ENCODE measurements at regions of chr9 and their contacts with region 1.

Region 1: DNA sequence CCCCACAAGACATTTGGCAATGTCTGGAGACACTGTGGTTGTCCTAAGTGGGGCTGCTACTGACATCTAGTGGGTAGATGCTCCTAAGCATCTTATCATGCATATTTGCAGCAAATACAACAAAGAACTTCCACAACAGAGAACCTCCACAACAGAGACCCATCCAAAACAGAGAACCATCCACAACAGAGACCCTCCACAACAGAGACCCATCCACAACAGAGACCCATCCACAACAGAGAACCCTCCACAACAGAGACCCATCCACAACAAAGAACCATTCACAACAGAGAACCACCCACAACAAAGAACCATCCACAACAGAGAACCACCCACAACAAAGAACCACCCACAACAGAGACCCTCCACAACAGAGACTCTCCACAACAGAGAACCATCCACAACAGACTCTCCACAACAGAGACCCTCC is 32.8 kb downstream of the ARPC5L start:
- DNase-seq: no peak
- H3K4me3 ChIP-seq: no peak overlapping the region
- CTCF ChIP-seq: peak; percentile 52

Region 2: GRCh38 chr9:124868511-124869465 is 26.0 kb before region 1 on chr9:
- CTCF ChIA-PET with region 1: interaction called, 11 read pairs
- POLR2A ChIA-PET with region 1: no interaction called
- DNase-seq: no peak
- H3K4me3 ChIP-seq: peak overlapping the region; percentile 90
- CTCF ChIP-seq: peak; percentile 29

Region 3: DNA sequence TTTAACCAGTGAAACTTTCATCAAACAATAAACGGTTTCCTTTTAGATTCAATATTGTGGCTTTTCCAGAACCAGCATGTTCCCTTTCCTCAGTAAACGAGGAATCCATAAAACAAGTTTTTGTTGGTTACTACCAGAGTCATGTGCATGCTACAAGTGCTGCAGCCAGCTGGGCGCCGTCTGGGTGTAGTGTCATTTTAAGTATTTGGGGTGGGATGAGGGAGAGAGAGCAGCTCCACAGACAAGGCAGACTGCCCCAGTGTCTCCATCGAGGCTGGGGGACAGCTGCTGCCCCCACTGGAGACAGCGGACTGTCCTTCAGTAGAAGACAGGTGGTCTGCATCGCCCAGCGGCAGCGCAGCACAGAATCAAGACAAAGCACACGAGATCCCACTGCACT is 15.5 kb before region 1 on chr9:
- CTCF ChIA-PET with region 1: interaction called, 21 read pairs
- POLR2A ChIA-PET with region 1: interaction called, 3 read pairs
- DNase-seq: no peak
- H3K4me3 ChIP-seq: no peak overlapping the region
- CTCF ChIP-seq: no peak

Region 4: DNA sequence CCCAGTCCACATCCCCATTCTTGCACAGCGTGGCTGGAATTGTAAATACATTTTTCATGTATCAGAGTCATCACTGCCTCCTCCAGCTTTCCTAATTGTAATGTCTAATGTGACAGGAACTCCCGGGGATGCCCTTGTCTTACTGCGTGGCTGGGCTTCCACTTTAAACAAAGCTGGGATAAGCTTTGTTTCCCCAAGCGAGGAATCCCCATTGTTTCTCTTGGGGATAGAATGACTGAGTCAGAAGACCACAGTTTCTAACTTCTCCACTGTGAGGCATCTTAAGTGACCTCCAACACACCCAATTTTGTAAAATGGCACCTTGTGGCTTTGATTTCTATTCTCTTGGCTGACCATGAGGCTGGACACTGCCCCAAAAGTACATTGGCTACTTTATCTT is 10.4 kb before region 1 on chr9:
- CTCF ChIA-PET with region 1: interaction called, 21 read pairs
- POLR2A ChIA-PET with region 1: no interaction called
- DNase-seq: no peak
- H3K4me3 ChIP-seq: no peak overlapping the region
- CTCF ChIP-seq: no peak

Region 5: DNA sequence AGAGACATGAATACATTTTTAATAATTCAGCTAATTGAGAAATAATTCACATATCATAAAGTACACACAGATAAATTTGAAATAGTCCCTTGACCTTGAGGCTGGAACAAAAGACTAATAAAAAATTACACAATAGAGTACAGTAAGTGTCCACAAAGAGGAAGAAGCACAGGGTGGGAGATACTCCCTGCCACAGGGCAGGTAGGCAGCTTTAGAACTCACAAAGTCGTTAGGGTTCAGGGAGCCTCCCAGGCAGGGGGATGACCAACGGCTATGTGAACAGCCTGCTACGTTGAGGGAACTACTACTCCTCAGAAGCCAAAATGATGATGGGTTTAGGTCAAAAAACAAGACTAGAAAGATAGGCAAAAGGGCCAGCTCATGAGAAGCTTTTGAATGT is 13.8 kb after region 1 on chr9:
- CTCF ChIA-PET with region 1: interaction called, 10 read pairs
- POLR2A ChIA-PET with region 1: no interaction called
- DNase-seq: no peak
- H3K4me3 ChIP-seq: no peak overlapping the region
- CTCF ChIP-seq: no peak

Region 6: GRCh38 chr9:124975131-124975530 is 80.4 kb after region 1 on chr9:
- CTCF ChIA-PET with region 1: no interaction called
- POLR2A ChIA-PET with region 1: no interaction called
- DNase-seq: no peak
- H3K4me3 ChIP-seq: no peak overlapping the region
- CTCF ChIP-seq: no peak